ENCODE measurements at regions of chr16 and their contacts with region 1.

Region 1: DNA sequence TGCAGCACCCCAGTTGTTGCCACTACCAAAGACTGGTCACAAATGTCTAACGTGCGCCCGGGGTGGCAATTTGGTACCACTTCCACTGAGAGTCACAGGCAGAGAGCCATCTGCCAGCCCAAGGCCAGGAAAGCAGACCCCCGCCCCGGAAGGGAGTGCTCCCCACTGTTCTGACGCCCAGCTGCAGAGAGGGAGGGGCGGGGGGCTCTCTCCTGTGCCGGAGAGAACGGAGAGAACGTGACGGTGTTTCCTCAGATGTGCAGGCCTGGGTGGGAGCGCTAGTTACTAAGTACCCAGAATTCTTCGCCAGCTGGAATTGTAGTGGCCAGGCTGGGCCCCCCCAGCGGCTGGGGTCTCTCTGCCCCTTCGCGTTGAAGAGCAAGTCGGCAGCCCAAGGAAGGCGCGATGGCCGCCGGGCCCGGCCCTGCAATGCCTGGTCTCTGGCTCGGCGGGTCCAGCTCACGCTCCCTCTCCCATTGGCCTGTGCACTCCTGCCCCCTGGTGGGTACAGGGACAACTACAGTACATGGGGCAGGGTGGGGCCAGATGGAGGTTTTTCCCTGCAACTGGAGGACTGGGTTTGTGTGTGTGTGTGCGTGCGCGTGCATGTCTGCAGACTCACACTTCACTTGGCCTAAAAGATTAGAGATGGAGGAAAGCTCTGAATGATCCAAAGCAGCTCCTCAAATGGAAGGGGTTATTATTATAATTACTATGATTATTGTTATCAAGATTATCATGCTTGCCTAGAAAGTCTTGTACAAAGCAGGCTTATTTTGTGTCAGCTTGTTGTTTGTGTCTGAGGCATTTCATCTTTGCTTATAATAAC is 107.1 kb downstream of the AMFR start:
- DNase-seq: peak; percentile 37 to 88
- H3K4me3 ChIP-seq: peak overlapping the region; percentile 45 to 53
- H3K27ac ChIP-seq: no peak overlapping the region
- H3K4me1 ChIP-seq: peaks cover 0 to 4% of the 10 kb centered on the region in 2 donors
- H3K27me3 ChIP-seq: no peaks in the 10 kb centered on the region
- CTCF ChIP-seq: peak; percentile 93 to 97 (median 95)

Region 2: GRCh38 chr16:55711959-55712876 is 606.0 kb before region 1 on chr16:
- intact Hi-C with region 1: loop called (anchors 5 kb)
- DNase-seq: no peak
- H3K4me3 ChIP-seq: no peak overlapping the region
- H3K27ac ChIP-seq: no peak overlapping the region
- H3K4me1 ChIP-seq: no peaks in the 10 kb centered on the region
- H3K27me3 ChIP-seq: no peaks in the 10 kb centered on the region
- CTCF ChIP-seq: peak; percentile 51 to 67 (median 57)

Region 3: DNA sequence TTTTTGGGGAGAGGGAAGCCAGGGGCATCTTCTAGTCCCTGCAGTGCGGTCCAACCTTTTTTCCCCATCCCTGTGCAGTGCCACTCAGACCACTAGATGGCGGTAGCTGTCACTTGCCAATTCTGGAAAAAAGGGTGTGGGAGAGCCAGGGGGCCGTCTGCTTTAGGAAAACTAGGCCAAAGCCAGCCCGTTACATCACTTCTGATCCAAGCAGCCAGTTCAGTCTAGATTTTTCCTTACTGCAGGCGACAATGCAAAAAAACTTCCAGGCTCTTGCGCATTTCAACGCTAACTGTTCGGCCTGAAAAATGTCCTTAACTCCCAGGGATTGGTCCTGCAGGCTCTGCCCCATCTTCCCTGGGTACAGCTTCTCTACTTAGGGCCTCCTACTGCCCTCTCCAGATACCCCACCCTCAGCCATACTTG is 373.8 kb before region 1 on chr16:
- intact Hi-C with region 1: loop called (anchors 1 kb)
- DNase-seq: peak; percentile 10 to 77
- H3K4me3 ChIP-seq: no peak overlapping the region
- H3K27ac ChIP-seq: no peak overlapping the region
- H3K4me1 ChIP-seq: no peaks in the 10 kb centered on the region
- H3K27me3 ChIP-seq: no peaks in the 10 kb centered on the region
- CTCF ChIP-seq: peak; percentile 70 to 88 (median 75)

Region 4: DNA sequence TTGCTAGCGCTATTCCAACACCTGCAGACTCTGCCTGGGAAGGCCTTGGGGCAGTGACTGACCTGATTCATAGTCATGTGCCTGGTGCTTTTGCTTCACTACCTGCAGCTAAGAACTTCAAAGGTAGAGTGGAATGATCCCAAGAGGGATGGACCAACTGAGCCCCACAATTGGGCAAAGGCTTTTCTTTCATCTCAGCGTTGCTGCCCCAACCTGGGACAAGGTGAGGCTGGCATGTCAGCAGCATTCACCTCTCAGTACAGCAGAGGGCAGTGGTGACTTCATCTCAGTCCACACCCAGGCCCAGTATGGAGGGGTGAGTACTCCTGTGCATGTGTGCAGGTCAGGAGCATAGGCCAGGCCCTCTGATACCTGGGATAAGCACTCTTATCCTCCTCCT is 276.5 kb before region 1 on chr16:
- intact Hi-C with region 1: loop called (anchors 2 kb)
- DNase-seq: no peak
- H3K4me3 ChIP-seq: no peak overlapping the region
- H3K27ac ChIP-seq: no peak overlapping the region
- H3K4me1 ChIP-seq: no peaks in the 10 kb centered on the region
- H3K27me3 ChIP-seq: no peaks in the 10 kb centered on the region
- CTCF ChIP-seq: peak in 1 of 3 experiments; percentile 14

Measured in ascending aorta (tissue), 2 donors.